ENCODE measurements at regions of chr4 and their contacts with region 1.

Region 1: GRCh38 chr4:150176547-150176946 is 98.3 kb downstream of the DCLK2 start:
- DNase-seq: no peak

Region 2: DNA sequence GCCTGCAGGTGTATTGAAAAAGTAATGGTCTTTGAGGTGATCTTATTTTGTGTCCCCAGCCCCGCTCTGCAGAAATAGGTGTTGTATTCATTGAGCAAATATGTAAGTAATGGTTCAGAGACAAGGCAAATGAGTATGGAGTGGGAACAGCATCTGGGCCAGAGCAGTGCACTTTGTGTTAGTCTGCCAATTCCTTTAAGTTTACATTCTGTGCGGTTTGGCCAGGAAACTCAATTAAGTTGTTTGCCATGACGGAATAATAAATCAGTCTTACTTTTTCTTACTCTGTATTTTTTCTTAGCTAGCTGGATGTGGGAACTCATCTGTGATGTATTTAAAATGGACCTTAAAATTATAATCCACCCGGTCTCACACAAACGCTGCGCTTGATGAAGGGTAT is 85.7 kb before region 1 on chr4:
- intact Hi-C with region 1: loop called in 1 of 2 experiments (anchors 1 kb)
- DNase-seq: no peak